HEK293 (cell line): ENCODE measurements at regions of chr12 and their contacts with region 1.

Region 1: GRCh38 chr12:57462251-57462911 is 2.8 kb downstream of the GLI1 start:
- H3K4me3 ChIP-seq: peak overlapping the region; percentile 48
- H3K27ac ChIP-seq: peak overlapping the region; percentile 25
- H3K4me1 ChIP-seq: peaks cover 8% of the 10 kb centered on the region
- CTCF ChIP-seq: peak; percentile 94

Region 2: DNA sequence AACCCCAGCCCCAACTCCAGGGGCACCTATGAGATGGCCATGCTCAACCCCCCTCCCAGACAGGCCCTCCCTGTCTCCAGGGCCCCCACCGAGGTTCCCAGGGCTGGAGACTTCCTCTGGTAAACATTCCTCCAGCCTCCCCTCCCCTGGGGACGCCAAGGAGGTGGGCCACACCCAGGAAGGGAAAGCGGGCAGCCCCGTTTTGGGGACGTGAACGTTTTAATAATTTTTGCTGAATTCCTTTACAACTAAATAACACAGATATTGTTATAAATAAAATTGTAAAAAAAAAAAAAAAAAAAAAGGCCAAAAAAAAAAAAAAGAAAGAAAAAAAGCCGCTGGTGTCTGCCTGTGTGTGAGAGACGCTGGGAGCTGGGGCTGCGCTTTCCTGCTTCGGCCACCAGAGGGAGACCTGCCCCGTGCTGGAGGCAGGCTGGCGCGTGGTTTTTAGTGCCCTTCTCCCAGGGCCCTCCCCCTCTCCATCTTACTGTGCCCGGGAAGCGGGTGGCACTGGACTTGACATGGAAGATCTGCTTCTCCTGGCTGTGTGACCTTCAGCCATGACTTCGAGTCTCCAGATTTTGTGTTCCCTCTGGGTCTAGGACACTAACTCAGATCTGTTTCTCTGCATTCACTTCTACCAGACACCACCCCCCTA is 249.2 kb before region 1 on chr12:
- CTCF ChIA-PET with region 1: interaction called, 16 read pairs
- POLR2A ChIA-PET with region 1: no interaction called
- H3K4me3 ChIP-seq: no peak overlapping the region
- H3K27ac ChIP-seq: no peak overlapping the region
- H3K4me1 ChIP-seq: peaks cover 5% of the 10 kb centered on the region
- CTCF ChIP-seq: peak; percentile 81

Region 3: GRCh38 chr12:57238854-57239554 is 223.4 kb before region 1 on chr12:
- CTCF ChIA-PET with region 1: interaction called, 25 read pairs
- POLR2A ChIA-PET with region 1: no interaction called
- H3K4me3 ChIP-seq: no peak overlapping the region; the same call in 1 of the 2 replicates
- H3K27ac ChIP-seq: no peak overlapping the region; the same call in 1 of the 2 replicates
- H3K4me1 ChIP-seq: peaks cover 17% of the 10 kb centered on the region
- CTCF ChIP-seq: peak; percentile 100

Region 4: GRCh38 chr12:57280211-57281062 is 181.9 kb before region 1 on chr12:
- CTCF ChIA-PET with region 1: interaction called, 13 read pairs
- POLR2A ChIA-PET with region 1: no interaction called
- H3K4me3 ChIP-seq: no peak overlapping the region
- H3K27ac ChIP-seq: no peak overlapping the region
- H3K4me1 ChIP-seq: 0 out of 2 replicates have a peak, but pooled peaks cover 7% of the 10 kb centered on the region
- CTCF ChIP-seq: no peak

Region 5: DNA sequence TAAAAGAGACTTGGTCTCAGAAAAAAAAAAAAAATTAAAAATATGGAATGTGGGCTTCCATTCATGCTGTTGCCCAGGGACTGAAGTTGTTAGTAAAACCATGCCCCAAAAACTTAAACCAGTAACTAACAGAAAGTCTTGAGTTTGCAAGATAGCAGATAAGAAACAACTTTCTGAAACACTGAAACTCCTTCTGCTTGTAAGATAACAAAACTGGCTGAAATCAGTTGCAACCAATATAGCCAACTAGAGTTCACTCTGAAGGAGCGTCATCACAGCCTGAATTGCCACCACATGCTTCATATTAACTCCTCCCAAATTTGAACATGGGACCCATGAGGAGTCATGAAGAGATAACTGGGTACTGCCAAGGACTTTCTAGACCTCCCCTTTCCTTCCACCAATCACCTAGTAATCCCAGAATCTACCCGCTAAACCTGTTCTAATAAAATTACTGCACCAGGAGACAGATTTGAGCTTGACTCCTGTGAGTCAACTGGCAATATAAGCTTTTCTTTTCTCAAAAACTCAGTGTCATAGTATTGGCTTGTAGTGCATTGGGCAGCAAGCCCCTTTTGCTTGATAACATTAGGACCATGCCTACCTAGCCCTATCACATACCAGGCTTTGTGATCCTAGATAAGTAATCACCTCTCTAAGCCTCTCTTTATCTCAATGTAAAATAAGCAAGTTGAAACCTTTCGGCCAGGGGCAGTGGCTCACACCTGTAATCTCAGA is 85.1 kb before region 1 on chr12:
- CTCF ChIA-PET with region 1: no interaction called
- POLR2A ChIA-PET with region 1: no interaction called
- H3K4me3 ChIP-seq: no peak overlapping the region
- H3K27ac ChIP-seq: no peak overlapping the region
- H3K4me1 ChIP-seq: no peaks in the 10 kb centered on the region
- CTCF ChIP-seq: no peak

Region 6: DNA sequence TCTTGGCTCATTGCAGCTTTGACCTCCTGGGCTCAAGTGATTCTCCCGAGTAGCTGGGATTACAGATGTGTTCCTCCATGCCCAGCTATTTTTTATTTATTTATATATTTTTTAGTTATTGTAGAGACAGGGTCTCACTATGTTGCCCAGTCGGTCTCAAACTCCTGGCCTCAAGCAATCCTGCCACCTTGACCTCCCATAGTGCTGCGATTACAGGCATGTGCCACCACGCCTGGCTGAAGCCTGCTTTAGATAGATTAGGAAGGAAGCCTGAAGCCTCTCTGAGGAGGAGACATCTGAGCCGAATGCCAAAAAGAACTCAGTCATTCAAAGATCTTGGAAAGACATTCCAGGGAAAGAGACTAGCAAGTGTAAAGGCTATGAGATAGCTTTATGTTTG is 17.6 kb before region 1 on chr12:
- CTCF ChIA-PET with region 1: interaction called, 14 read pairs
- POLR2A ChIA-PET with region 1: no interaction called
- H3K4me3 ChIP-seq: no peak overlapping the region
- H3K27ac ChIP-seq: no peak overlapping the region
- H3K4me1 ChIP-seq: no peaks in the 10 kb centered on the region
- CTCF ChIP-seq: no peak

Region 7: GRCh38 chr12:57487597-57488401 is 25.4 kb after region 1 on chr12 and contains the start of gene MARS1:
- CTCF ChIA-PET with region 1: interaction called, 10 read pairs
- POLR2A ChIA-PET with region 1: interaction called, 4 read pairs
- H3K4me3 ChIP-seq: peak within 1 kb of the TSS; percentile 91
- H3K27ac ChIP-seq: peak within 1 kb of the TSS; percentile 87
- H3K4me1 ChIP-seq: no peaks in the 10 kb centered on the region
- CTCF ChIP-seq: peak; percentile 60